ENCODE measurements at regions of chr11 and their contacts with region 1.

Region 1: GRCh38 chr11:47176328-47177228 is at the start of gene ARFGAP2:
- DNase-seq: peak; percentile 91 to 97
- H3K4me3 ChIP-seq: peak within 1 kb of the TSS; percentile 99
- H3K4me1 ChIP-seq: peaks cover 9% of the 10 kb centered on the region; the same call in 1 of the 2 replicates
- H3K27me3 ChIP-seq: no peaks in the 10 kb centered on the region

Region 2: GRCh38 chr11:47004595-47005033 is 172.0 kb before region 1 on chr11:
- in situ Hi-C with region 1: no loop called
- DNase-seq: no peak
- H3K4me3 ChIP-seq: no peak overlapping the region
- H3K4me1 ChIP-seq: no peaks in the 10 kb centered on the region
- H3K27me3 ChIP-seq: no peaks in the 10 kb centered on the region

Region 3: DNA sequence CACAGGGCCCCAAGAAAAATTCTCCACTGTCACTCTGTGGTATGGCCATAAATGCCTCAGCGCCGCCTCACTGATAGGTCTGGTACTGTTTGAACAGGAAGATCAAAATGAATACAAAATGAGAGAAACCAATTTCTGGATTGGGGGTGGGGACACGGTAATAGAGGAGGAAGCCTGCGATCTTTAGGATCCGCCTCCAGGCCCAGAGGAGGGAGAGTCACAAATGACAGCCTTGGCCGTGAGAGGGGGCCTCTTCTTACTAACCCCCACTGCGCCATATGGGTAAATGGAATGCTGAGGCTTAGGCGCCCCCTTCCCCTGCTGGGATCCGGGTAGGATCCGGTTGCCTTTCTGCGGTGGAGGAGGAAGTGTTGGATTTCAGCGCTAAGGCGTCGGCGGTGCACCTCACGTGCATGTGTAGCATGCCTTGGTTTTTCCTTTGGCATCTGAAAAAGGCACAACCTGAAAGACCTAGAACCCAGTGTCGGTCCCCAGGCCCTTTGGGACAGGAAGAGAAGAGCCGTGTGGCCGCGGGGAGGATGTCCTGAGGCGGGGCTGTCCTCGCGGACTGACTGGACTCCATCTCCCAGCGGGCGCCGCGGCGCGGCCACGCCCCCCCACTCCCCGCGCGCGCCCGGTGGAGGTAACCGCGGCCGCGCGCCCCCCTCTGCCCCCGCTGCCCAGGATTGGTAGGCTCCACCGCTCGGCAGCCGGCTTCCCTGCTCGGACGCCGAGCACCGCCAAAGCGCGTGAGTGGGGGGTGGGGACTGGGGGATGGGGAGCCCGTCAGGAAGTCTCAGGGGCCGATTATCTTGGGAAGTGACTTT is 92.6 kb after region 1 on chr11:
- in situ Hi-C with region 1: loop called (anchors 5 kb)
- DNase-seq: peak; percentile 83 to 94
- H3K4me3 ChIP-seq: peak overlapping the region; percentile 57
- H3K4me1 ChIP-seq: peaks cover 19% of the 10 kb centered on the region
- H3K27me3 ChIP-seq: no peaks in the 10 kb centered on the region